Activated naive CD4-positive, alpha-beta T cell treated with anti-CD3 and anti-CD28 coated beads for 36 hours (primary cell): ENCODE measurements at regions of chr3 and their contacts with region 1.

Region 1: DNA sequence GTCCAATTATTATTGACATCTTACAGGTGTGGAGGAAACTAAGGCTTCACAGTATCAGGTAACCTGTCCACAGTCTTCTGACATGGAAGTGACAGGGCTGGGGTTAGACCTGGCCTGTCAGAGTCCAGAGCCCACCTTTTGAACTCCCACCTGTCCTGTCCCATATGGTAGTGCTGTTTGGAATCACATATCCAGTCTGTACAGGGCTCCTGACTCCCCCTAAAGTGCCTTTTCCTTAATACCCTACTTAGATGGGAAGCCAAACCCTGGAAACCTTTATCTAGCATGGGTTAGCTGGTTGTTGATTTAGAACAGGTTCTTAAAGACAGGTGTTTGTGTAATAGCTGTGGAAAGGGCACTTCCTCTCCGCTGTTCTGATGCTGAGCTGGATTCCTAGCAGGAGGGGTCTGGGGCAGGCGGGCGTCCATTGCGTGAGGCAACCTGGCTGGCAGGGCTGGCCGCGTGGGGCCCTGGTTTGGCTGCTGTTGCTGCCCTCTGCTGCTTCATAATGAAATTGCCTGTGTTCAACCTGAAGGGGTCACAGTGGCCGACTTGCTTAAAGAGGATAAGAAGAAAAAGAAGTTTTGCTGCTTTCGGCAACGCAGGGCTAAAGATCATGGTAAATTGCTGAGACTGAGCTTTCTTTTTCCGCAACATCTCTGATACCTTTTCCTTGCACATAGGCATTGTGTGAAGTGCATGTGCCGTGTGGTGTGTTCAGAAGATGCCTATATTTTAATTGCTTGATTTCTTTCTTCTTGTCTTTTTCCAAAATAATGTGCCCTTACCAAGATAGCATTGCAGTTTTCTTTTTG is 136.2 kb downstream of the CHDH start:
- DNase-seq: peak; percentile 79
- H3K4me3 Mint-ChIP-seq: no peak overlapping the region
- H3K27ac Mint-ChIP-seq: no peak overlapping the region
- H3K4me1 Mint-ChIP-seq: no peaks in the 10 kb centered on the region
- H3K27me3 Mint-ChIP-seq: peaks cover 3% of the 10 kb centered on the region

Region 2: DNA sequence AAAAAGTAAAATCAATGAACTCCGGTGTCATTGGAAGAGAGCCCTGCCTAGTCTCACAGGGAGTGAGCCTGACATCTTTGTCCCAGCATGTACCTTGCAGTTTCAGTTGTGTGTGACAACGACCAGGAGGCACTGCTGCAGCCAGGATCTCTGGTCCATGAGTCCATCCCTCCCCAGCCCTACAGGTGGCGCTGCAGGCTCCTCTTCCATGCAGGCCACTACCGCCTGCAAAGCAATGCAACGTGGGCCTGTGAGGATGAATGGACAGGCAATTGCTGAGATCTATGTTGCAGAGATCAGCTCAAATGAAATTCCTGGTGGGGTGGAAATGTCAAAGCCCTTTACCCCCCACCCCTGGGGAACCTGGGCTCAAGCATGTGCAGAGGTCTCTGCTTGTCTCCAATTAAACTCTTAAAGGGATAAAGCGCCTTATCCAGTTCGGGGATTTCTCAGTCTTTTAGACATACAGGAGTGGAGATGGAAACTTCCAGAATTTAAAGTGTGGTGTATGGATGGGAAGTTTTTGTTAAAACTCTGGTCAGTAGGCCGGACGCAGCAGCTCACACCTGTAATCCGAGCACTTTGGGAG is 490.1 kb before region 1 on chr3:
- CTCF ChIA-PET with region 1: interaction called, 6 read pairs
- intact Hi-C with region 1: loop called (anchors 1 kb)
- DNase-seq: peak; percentile 91
- H3K4me3 Mint-ChIP-seq: no peak overlapping the region
- H3K27ac Mint-ChIP-seq: no peak overlapping the region
- H3K4me1 Mint-ChIP-seq: peaks cover 1% of the 10 kb centered on the region
- H3K27me3 Mint-ChIP-seq: no peaks in the 10 kb centered on the region

Region 3: GRCh38 chr3:53303957-53304356 is 406.1 kb before region 1 on chr3:
- CTCF ChIA-PET with region 1: no interaction called
- intact Hi-C with region 1: loop called (anchors 1 kb)
- DNase-seq: no peak
- H3K4me3 Mint-ChIP-seq: no peak overlapping the region
- H3K27ac Mint-ChIP-seq: no peak overlapping the region
- H3K4me1 Mint-ChIP-seq: peaks cover 3% of the 10 kb centered on the region
- H3K27me3 Mint-ChIP-seq: no peaks in the 10 kb centered on the region

Region 4: DNA sequence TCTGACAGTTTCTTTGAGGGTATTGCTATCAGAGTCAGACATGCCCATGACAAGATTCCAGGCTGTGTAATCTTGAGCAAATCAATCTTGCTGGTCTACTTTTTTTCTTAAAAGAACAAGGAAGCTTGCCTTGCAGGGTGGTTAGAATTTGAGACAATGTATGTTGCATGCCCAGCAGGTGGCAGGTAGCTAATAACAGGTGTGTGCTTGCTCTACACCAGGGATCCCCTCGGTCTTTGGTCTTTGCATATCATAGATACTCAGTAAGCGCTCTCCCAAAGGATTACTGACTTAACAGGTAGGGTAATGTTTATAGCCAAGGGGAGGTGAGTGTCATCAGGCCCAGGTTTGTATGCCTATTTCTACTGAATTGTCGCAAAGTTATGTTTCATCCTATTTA is 178.3 kb before region 1 on chr3:
- CTCF ChIA-PET with region 1: no interaction called
- intact Hi-C with region 1: loop called (anchors 10 kb)
- DNase-seq: peak; percentile 11
- H3K4me3 Mint-ChIP-seq: no peak overlapping the region
- H3K27ac Mint-ChIP-seq: no peak overlapping the region
- H3K4me1 Mint-ChIP-seq: no peaks in the 10 kb centered on the region
- H3K27me3 Mint-ChIP-seq: peaks cover 9% of the 10 kb centered on the region